Aorta (tissue), 5 donors: ENCODE measurements at regions of chr11 and their contacts with region 1.

Region 1: GRCh38 chr11:69918938-69919650 is 99.9 kb upstream of the FGF3 start:
- DNase-seq: peak; percentile 88 to 96
- ATAC-seq: peak; percentile 73
- H3K4me3 ChIP-seq: no peak overlapping the region
- H3K27ac ChIP-seq: peak overlapping the region in 1 of 2 donors; percentile 89
- H3K4me1 ChIP-seq: no peaks in the 10 kb centered on the region
- H3K27me3 ChIP-seq: no peaks in the 10 kb centered on the region

Region 2: GRCh38 chr11:69801519-69802335 is 117.4 kb before region 1 on chr11:
- intact Hi-C with region 1: no loop called
- DNase-seq: no peak
- ATAC-seq: no peak
- H3K4me3 ChIP-seq: no peak overlapping the region
- H3K27ac ChIP-seq: no peak overlapping the region
- H3K4me1 ChIP-seq: no peaks in the 10 kb centered on the region
- H3K27me3 ChIP-seq: peaks cover 0 to 1% of the 10 kb centered on the region in 2 donors

Region 3: DNA sequence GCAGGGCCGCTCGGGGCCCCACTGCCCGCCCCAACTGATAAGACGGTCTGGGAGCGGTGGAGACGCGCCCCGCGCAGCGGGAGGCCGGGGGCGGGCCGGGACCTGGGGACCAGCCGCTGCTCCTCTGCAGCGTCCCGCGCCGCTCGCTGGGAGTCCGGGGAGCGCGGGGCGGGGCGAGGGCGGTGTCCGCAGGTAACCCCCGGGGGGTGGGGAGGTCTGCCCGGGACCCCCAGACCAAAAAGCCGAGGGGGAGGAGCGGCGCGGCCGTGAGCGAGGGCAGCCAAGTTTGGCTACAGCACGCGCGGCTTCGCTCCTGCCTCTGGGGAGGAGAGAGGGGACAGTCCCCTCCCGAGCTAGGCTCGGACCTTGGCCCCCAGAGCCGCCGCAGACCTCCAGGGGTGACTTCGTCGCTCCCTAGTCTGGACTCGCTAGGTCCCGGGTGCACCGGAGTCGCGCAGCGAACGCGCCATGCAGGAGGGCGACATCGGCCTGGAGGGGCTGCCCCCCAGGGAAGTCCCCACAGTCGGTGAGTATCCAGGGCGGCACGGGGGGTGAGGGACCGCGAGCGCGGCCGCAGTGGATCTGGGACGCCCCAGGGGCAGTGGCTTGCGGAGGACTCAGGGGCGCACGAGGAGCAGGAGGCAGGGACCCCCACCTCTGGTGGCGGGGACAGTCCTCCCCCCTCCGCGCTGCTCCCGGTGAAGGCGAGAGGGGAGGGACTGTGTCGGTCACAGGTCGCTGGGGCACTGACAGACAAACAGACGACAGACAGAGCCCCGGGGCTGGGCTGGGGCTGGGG is 66.7 kb after region 1 on chr11:
- intact Hi-C with region 1: loop called (anchors 2 kb)
- DNase-seq: no peak
- ATAC-seq: peak; percentile 53
- H3K4me3 ChIP-seq: peak overlapping the region; percentile 27 to 43
- H3K27ac ChIP-seq: peak overlapping the region; percentile 70 to 96
- H3K4me1 ChIP-seq: no peaks in the 10 kb centered on the region
- H3K27me3 ChIP-seq: no peaks in the 10 kb centered on the region

Region 4: GRCh38 chr11:70005107-70005818 is 86.2 kb after region 1 on chr11:
- intact Hi-C with region 1: loop called in 1 of 2 experiments (anchors 5 kb)
- DNase-seq: no peak
- ATAC-seq: peak; percentile 40
- H3K4me3 ChIP-seq: no peak overlapping the region
- H3K27ac ChIP-seq: peak overlapping the region; percentile 38 to 85
- H3K4me1 ChIP-seq: peaks cover 0 to 2% of the 10 kb centered on the region in 2 donors
- H3K27me3 ChIP-seq: no peaks in the 10 kb centered on the region

Region 5: GRCh38 chr11:70016666-70017367 is 97.7 kb after region 1 on chr11:
- intact Hi-C with region 1: loop called in 1 of 2 experiments (anchors 5 kb)
- DNase-seq: no peak
- ATAC-seq: no peak
- H3K4me3 ChIP-seq: no peak overlapping the region
- H3K27ac ChIP-seq: peak overlapping the region; percentile 6 to 43
- H3K4me1 ChIP-seq: no peaks in the 10 kb centered on the region
- H3K27me3 ChIP-seq: no peaks in the 10 kb centered on the region

Region 6: GRCh38 chr11:70078095-70078795 is 159.2 kb after region 1 on chr11 and contains the start of gene ANO1:
- intact Hi-C with region 1: loop called (anchors 2 to 5 kb)
- DNase-seq: peak; percentile 50 to 83
- ATAC-seq: no peak
- H3K4me3 ChIP-seq: peak within 1 kb of the TSS; percentile 67 to 81
- H3K27ac ChIP-seq: peak within 1 kb of the TSS; percentile 83 to 92
- H3K4me1 ChIP-seq: peaks cover 0 to 4% of the 10 kb centered on the region in 2 donors
- H3K27me3 ChIP-seq: no peaks in the 10 kb centered on the region
- total RNA-seq, gene ANO1: 65.6 to 136 TPM

Region 7: DNA sequence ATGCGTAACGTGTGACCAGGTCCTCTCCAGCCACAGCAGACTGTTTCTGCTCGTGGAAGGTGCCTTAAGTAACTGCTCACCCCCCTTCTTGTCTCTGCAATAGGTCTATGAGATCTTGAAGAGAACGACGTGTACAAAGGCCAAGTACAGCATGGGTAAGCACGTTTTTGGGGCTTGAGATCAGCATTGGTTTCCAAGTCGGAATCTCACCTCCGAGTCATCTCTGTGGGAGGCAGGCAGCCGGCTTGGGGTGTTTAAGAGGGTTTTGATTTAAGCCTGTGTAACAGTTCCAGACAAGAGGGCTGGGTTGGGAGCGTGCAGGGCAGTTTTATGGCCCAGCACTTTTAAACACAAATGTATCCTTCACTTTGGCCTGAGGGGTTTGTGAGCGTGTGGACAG is 189.2 kb after region 1 on chr11:
- intact Hi-C with region 1: loop called in 1 of 2 experiments (anchors 10 kb)
- DNase-seq: no peak
- ATAC-seq: no peak
- H3K4me3 ChIP-seq: no peak overlapping the region
- H3K27ac ChIP-seq: peak overlapping the region in 1 of 2 donors; percentile 86
- H3K4me1 ChIP-seq: peaks cover 0 to 1% of the 10 kb centered on the region in 2 donors
- H3K27me3 ChIP-seq: no peaks in the 10 kb centered on the region

Region 8: DNA sequence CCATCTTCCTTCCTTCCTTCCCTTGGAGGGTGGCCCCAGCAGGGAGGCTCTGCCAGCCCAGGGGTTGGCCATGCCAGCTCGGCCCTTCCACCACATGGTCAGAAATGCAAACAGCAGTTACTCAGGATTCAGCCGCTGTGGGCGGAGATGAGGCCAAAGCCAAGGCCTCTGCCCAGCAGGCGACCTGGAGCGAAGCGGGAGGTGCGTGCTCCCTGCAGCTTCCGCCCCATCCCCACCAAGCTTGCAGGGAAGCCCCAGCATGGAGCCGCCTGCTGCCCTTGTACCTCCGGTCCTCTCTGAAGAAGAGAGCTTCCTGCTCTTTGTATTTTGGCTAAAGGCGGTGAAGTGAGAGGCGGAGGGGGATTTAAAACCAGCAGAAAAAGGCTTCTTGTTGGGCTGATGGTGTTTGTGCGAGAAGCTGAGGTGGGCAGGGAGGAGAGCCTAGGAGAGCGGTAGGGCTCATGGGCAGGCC is 209.4 kb after region 1 on chr11:
- intact Hi-C with region 1: loop called in 1 of 2 experiments (anchors 5 kb)
- DNase-seq: peak; percentile 86 to 92
- ATAC-seq: peak; percentile 69
- H3K4me3 ChIP-seq: no peak overlapping the region
- H3K27ac ChIP-seq: peak overlapping the region; percentile 10 to 91
- H3K4me1 ChIP-seq: no peaks in the 10 kb centered on the region
- H3K27me3 ChIP-seq: no peaks in the 10 kb centered on the region